ENCODE measurements at regions of chr5 and their contacts with region 1.

Region 1: DNA sequence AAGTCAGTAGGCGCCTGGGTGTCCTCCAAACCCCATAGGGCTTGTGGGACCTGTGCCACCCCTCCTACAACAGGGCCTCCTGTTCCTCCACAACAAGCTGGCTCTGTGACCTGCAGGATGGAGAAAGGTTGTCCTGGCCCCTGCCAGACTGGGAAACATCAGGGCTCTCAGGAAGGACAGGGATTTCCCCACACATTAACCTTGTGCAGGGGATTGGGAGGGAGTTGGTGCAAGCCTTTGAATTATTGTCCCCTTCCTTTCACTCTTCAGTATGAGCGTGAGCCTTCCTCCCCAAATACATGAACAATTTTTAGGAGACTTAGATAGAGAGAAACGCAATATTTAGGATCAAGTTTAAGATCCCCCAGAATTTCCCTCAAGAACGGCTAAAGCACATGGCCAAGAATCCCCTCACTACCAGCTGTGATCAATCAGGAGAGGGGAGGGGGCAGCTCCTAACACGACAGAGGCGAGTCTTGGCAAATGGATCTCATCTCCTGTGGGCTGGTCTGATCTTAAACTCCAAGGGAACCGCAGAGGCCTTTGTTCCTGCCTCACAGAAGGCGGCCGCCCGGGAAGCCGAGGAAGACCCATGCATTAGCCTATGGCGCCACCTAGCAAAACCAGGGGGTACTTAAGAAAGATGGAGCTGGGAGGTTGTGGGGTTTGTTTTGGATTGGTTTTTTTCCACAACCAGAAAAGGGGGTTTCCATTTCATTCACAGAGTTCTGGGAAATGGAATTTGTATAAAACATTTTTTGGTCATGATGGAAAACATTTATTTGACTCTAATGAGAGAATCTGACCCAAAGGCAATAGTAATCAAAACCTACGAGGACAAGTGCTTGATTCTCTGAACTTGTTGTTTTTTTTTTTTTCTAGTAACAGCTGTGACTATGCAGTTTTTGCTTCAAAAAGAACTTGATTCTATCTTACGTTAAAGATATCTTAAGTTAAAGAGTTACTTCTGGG is 36.1 kb upstream of the OSMR start:
- DNase-seq: peak; percentile 92
- ATAC-seq: peak; percentile 74
- H3K4me3 ChIP-seq: no peak overlapping the region
- H3K27ac ChIP-seq: peak overlapping the region; percentile 65
- H3K4me1 ChIP-seq: peaks cover 20% of the 10 kb centered on the region
- H3K27me3 ChIP-seq: no peaks in the 10 kb centered on the region
- CTCF ChIP-seq: peak; percentile 99
- POLR2A ChIP-seq: peak; percentile 68
- RAD21 ChIP-seq: peak; percentile 100

Region 2: GRCh38 chr5:38208782-38209378 is 600.8 kb before region 1 on chr5:
- CTCF ChIA-PET with region 1: no interaction called
- POLR2A ChIA-PET with region 1: no interaction called
- dilution Hi-C with region 1: no loop called
- in situ Hi-C with region 1: no loop called
- intact Hi-C with region 1: loop called (anchors 2 kb)
- DNase-seq: peak; percentile 31
- ATAC-seq: no peak
- H3K4me3 ChIP-seq: no peak overlapping the region
- H3K27ac ChIP-seq: no peak overlapping the region
- H3K4me1 ChIP-seq: no peaks in the 10 kb centered on the region
- H3K27me3 ChIP-seq: no peaks in the 10 kb centered on the region; the same call in 1 of the 2 replicates
- CTCF ChIP-seq: peak; percentile 41
- POLR2A ChIP-seq: no peak
- RAD21 ChIP-seq: peak; percentile 53

Region 3: DNA sequence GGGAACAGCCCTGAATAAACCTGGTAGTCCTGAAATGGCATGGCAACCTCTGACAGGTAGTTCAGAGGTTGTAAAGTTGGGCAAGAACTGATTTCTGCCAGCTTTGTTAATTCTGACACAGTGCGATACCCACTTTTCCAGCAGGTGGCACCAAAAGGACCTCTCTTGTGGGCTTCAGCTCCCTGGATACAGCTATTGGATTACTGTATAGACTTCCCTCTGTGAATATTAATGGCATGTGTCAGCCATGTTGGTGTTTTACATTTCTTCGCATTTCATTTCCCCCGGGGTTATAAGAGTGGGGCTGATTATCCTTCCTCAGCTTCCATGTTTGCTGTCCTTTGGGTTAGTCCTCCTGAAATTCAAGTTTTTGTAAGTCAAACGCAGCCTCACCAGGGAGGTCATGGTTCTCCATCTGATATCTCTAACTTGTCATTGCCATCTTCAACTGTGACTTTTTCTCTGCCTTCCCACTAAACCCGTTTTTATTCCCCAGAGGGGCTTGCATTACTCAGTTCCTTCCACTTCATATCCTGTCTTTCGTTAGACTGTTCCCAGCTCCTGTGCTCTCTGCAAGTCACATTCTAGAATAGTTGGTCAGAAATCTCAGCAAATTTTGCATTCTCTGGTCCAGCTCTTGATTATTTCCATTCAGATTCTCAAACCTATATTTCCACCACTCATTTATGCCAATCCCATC is 388.8 kb before region 1 on chr5:
- CTCF ChIA-PET with region 1: interaction called, 21 read pairs
- POLR2A ChIA-PET with region 1: no interaction called
- dilution Hi-C with region 1: no loop called
- in situ Hi-C with region 1: no loop called
- intact Hi-C with region 1: loop called (anchors 1 kb)
- DNase-seq: peak; percentile 69
- ATAC-seq: peak; percentile 85
- H3K4me3 ChIP-seq: no peak overlapping the region
- H3K27ac ChIP-seq: no peak overlapping the region
- H3K4me1 ChIP-seq: peaks cover 10% of the 10 kb centered on the region
- H3K27me3 ChIP-seq: peaks cover 5% of the 10 kb centered on the region; the same call in 1 of the 2 replicates
- CTCF ChIP-seq: peak; percentile 75
- POLR2A ChIP-seq: no peak
- RAD21 ChIP-seq: peak; percentile 75

Region 4: DNA sequence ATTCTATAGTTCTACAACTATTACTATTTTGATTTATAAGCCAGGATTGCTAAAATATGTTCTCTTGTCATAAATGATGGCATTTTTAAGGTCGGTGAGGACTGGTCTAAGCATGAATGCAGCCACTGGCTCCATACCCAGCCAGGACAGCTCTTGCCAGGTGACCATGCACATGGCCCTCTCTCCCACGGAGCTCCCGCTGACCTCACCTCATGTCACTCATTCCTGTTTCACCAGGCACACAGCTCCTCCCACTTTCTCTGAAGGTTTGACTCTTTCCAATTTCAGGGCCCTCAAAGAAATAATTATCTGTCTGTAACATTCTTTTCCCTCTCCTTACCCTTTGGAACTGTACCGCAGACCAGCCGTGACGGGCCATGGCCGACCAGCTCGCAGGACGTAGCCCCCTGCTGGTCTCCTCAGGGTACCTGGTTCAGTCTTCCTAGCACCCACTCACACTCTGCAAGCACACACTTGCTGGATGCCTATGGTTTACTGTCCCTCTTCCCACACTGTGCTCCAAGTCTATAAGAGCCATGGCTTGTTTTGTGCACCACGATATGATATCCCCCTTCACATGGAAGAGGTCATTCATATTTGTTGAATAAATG is 325.8 kb before region 1 on chr5:
- CTCF ChIA-PET with region 1: no interaction called
- POLR2A ChIA-PET with region 1: no interaction called
- dilution Hi-C with region 1: no loop called
- in situ Hi-C with region 1: no loop called
- intact Hi-C with region 1: no loop called
- DNase-seq: no peak
- ATAC-seq: no peak
- H3K4me3 ChIP-seq: no peak overlapping the region
- H3K27ac ChIP-seq: no peak overlapping the region
- H3K4me1 ChIP-seq: no peaks in the 10 kb centered on the region; the same call in 1 of the 2 replicates
- H3K27me3 ChIP-seq: no peaks in the 10 kb centered on the region
- CTCF ChIP-seq: no peak
- POLR2A ChIP-seq: no peak
- RAD21 ChIP-seq: no peak

Region 5: DNA sequence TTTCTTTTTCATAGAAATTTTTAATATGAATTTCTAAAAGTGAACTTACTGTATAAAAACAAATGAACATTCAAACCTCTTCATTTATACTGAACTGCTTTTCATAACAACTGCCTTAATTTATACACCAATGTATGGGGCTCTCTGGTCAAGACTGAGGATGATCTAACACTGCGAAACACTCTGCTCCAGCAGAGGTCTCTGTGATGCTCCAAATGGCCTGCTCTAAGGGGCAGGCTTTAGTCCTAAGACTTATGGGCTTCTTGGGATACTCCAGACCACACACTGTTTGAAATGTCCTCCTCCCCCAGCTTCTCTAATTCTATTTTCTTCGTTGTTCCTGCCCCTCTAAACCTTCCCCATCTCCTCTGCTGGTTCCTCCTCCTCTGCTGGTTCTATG is 311.7 kb before region 1 on chr5:
- CTCF ChIA-PET with region 1: no interaction called
- POLR2A ChIA-PET with region 1: no interaction called
- dilution Hi-C with region 1: no loop called
- in situ Hi-C with region 1: no loop called
- intact Hi-C with region 1: loop called (anchors 5 kb)
- DNase-seq: peak; percentile 31
- ATAC-seq: peak; percentile 50
- H3K4me3 ChIP-seq: no peak overlapping the region
- H3K27ac ChIP-seq: no peak overlapping the region
- H3K4me1 ChIP-seq: peaks cover 4% of the 10 kb centered on the region
- H3K27me3 ChIP-seq: no peaks in the 10 kb centered on the region
- CTCF ChIP-seq: no peak
- POLR2A ChIP-seq: no peak
- RAD21 ChIP-seq: 0 out of 2 replicates have a peak, but pooled peaks have one; percentile 6

Region 6: GRCh38 chr5:38607396-38607795 is 202.3 kb before region 1 on chr5:
- CTCF ChIA-PET with region 1: no interaction called
- POLR2A ChIA-PET with region 1: no interaction called
- dilution Hi-C with region 1: no loop called
- in situ Hi-C with region 1: no loop called
- intact Hi-C with region 1: loop called (anchors 5 kb)
- DNase-seq: peak; percentile 97
- ATAC-seq: peak; percentile 90
- H3K4me3 ChIP-seq: no peak overlapping the region
- H3K27ac ChIP-seq: peak overlapping the region; percentile 80; the same call in 1 of the 2 replicates
- H3K4me1 ChIP-seq: peaks cover 12% of the 10 kb centered on the region
- H3K27me3 ChIP-seq: no peaks in the 10 kb centered on the region; the same call in 1 of the 2 replicates
- CTCF ChIP-seq: no peak
- POLR2A ChIP-seq: no peak
- RAD21 ChIP-seq: no peak

Region 7: GRCh38 chr5:38765399-38765861 is 44.2 kb before region 1 on chr5:
- CTCF ChIA-PET with region 1: no interaction called
- POLR2A ChIA-PET with region 1: interaction called, 3 read pairs
- dilution Hi-C with region 1: no loop called
- in situ Hi-C with region 1: no loop called
- intact Hi-C with region 1: loop called (anchors 1 kb)
- DNase-seq: peak; percentile 86
- ATAC-seq: peak; percentile 90
- H3K4me3 ChIP-seq: no peak overlapping the region
- H3K27ac ChIP-seq: peak overlapping the region; percentile 27; the same call in 1 of the 2 replicates
- H3K4me1 ChIP-seq: peaks cover 5% of the 10 kb centered on the region
- H3K27me3 ChIP-seq: peaks cover 25% of the 10 kb centered on the region
- CTCF ChIP-seq: no peak
- POLR2A ChIP-seq: no peak
- RAD21 ChIP-seq: no peak

Region 8: GRCh38 chr5:38853753-38854463 is 44.2 kb after region 1 on chr5:
- CTCF ChIA-PET with region 1: no interaction called
- POLR2A ChIA-PET with region 1: no interaction called
- dilution Hi-C with region 1: no loop called
- in situ Hi-C with region 1: no loop called
- intact Hi-C with region 1: no loop called
- DNase-seq: peak; percentile 94
- ATAC-seq: peak; percentile 79
- H3K4me3 ChIP-seq: no peak overlapping the region
- H3K27ac ChIP-seq: peak overlapping the region; percentile 32; the same call in 1 of the 2 replicates
- H3K4me1 ChIP-seq: peaks cover 15% of the 10 kb centered on the region
- H3K27me3 ChIP-seq: no peaks in the 10 kb centered on the region
- CTCF ChIP-seq: no peak
- POLR2A ChIP-seq: no peak; the same call in 1 of the 2 replicates
- RAD21 ChIP-seq: no peak